ENCODE measurements at regions of chr11 and their contacts with region 1.

Region 1: DNA sequence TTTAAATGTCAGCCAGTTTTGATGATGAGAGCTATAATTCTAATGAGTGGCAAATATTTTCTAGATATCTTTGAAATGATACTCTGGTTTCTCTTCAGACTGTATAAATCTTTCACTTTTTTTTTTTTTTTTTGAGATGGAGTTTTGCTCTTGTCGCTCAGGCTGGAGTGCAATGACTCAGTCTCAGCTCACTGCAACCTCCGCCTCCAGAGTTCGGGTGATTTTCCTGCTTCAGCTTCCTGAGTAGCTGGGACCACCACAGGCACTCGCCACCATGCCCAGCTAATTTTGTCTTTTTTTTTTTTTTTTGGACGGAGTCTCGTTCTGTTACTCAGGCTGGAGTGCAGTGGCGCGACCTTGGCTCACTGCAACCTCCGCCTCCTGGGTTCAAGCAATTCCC is 113.6 kb downstream of the TEAD1 start:
- DNase-seq: no peak
- H3K4me3 ChIP-seq: no peak overlapping the region
- H3K27ac ChIP-seq: no peak overlapping the region
- H3K4me1 ChIP-seq: peaks cover 4 to 19% (median 12%) of the 10 kb centered on the region in 4 experiments
- H3K27me3 ChIP-seq: no peaks in the 10 kb centered on the region
- CTCF ChIP-seq: no peak
- EP300 ChIP-seq: no peak
- POLR2A ChIP-seq: no peak
- RAD21 ChIP-seq: no peak

Region 2: DNA sequence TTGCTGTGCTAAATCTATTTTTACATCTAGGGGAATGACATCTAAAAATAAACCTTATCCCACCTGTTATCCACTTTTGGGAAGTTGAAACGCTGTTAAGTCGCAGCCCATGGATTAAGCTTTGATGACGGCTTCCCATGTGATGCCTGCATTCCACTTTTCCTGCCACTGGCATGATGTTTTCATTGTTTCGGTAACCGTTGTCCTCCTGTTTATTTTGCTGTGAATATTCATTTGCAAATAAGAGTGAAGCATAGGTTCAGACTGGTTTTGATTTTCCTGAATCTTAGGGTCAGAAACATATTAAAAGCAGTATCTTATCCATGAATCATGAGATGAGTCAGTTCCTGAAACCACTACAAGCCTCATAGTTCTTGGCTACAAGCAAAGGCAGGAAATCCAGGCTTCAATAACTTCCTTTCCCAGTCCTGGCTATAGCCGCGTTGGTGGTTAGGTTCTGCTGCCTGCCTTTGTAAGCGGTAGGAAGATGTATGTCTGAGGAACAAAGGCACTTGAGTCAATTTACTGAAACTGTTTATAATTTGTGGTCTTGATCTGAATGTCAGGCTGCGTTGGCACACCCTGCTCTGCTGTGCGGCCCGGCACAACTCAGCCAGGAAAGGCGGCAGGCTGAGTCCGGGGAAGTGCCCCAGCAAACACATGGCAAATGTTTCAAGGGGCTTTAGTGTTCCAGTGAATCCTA is 94.2 kb before region 1 on chr11:
- CTCF ChIA-PET with region 1: no interaction called
- POLR2A ChIA-PET with region 1: no interaction called
- DNase-seq: no peak
- H3K4me3 ChIP-seq: no peak overlapping the region
- H3K27ac ChIP-seq: no peak overlapping the region
- H3K4me1 ChIP-seq: peaks cover 16 to 47% (median 33%) of the 10 kb centered on the region in 4 experiments
- H3K27me3 ChIP-seq: peaks cover 0 to 1% (median 0%) of the 10 kb centered on the region in 4 experiments; a peak in 3 of 7 replicates
- CTCF ChIP-seq: no peak
- EP300 ChIP-seq: no peak
- POLR2A ChIP-seq: no peak
- RAD21 ChIP-seq: no peak

Region 3: GRCh38 chr11:12800032-12800671 is 12.3 kb after region 1 on chr11:
- CTCF ChIA-PET with region 1: interaction called, 4 read pairs
- POLR2A ChIA-PET with region 1: interaction called, 10 read pairs
- DNase-seq: no peak
- H3K4me3 ChIP-seq: 0 out of 8 replicates have a peak overlapping the region, but pooled peaks of 1 of the 4 experiments have one; percentile 7
- H3K27ac ChIP-seq: no peak overlapping the region
- H3K4me1 ChIP-seq: peaks cover 12 to 39% (median 26%) of the 10 kb centered on the region in 4 experiments
- H3K27me3 ChIP-seq: no peaks in the 10 kb centered on the region
- CTCF ChIP-seq: no peak
- EP300 ChIP-seq: no peak
- POLR2A ChIP-seq: no peak
- RAD21 ChIP-seq: no peak